ENCODE measurements at regions of chr1 and their contacts with region 1.

Region 1: DNA sequence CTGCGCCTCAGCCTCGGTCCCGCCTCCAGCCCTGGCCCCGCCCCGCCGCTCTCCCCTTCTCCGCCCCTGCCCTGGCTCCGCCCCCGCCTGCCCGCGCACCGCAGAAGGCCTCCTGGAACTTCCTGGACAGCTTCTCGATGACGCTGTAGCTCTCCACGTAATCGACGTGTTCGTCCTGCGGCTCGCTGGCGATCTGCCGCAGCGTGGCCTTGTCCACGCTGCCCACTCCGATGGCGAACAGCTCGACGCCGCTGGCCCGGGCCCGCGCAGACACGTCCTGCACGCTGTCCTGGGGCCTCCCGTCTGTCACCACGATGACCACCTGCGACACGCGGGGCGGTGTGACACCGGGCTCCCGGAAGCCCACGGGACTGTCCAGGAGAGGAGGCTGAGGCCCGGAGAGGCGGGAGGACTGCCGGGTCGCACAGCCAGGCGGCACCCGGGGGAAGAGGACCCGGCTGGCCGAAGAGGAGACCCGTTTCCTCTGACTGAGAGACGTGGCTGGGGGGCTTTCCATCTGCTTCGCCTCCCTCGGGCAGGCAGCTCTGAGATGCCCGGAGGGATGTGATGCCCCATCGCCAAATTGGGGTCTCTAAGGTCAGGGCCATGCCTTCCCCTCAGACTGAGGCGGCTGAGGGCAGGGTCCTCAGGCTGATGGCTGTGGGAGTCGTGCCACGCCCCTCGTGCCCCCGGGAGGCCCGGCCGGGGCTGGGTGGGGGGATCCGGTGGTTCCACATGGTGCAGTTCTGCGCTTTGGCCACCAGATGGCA is 4.6 kb downstream of the MATN1 start:
- DNase-seq: peak; percentile 98
- ATAC-seq: peak; percentile 64
- H3K4me3 ChIP-seq: peak overlapping the region; percentile 7 to 96 (median 92)
- H3K4me3 Mint-ChIP-seq: peak overlapping the region; percentile 88
- H3K27ac ChIP-seq: peak overlapping the region; percentile 99 to 100
- H3K27ac Mint-ChIP-seq: peak overlapping the region; percentile 94
- H3K4me1 ChIP-seq: peaks cover 18 to 54% of the 10 kb centered on the region in 2 donors
- H3K4me1 Mint-ChIP-seq: peaks cover 44% of the 10 kb centered on the region
- H3K27me3 ChIP-seq: no peaks in the 10 kb centered on the region
- H3K27me3 Mint-ChIP-seq: no peaks in the 10 kb centered on the region
- CTCF ChIP-seq: no peak

Region 2: GRCh38 chr1:30586671-30587070 is 132.2 kb before region 1 on chr1:
- CTCF ChIA-PET with region 1: no interaction called
- POLR2A ChIA-PET with region 1: no interaction called
- intact Hi-C with region 1: no loop called
- DNase-seq: no peak
- ATAC-seq: no peak
- H3K4me3 ChIP-seq: no peak overlapping the region
- H3K4me3 Mint-ChIP-seq: no peak overlapping the region
- H3K27ac ChIP-seq: no peak overlapping the region
- H3K27ac Mint-ChIP-seq: no peak overlapping the region
- H3K4me1 ChIP-seq: no peaks in the 10 kb centered on the region
- H3K4me1 Mint-ChIP-seq: no peaks in the 10 kb centered on the region
- H3K27me3 ChIP-seq: peaks cover 0 to 19% (median 2%) of the 10 kb centered on the region in 4 experiments
- H3K27me3 Mint-ChIP-seq: peaks cover 46% of the 10 kb centered on the region
- CTCF ChIP-seq: no peak

Region 3: GRCh38 chr1:30700528-30701257 is 18.1 kb before region 1 on chr1:
- CTCF ChIA-PET with region 1: no interaction called
- POLR2A ChIA-PET with region 1: no interaction called
- intact Hi-C with region 1: no loop called
- DNase-seq: no peak
- ATAC-seq: no peak
- H3K4me3 ChIP-seq: no peak overlapping the region
- H3K4me3 Mint-ChIP-seq: no peak overlapping the region
- H3K27ac ChIP-seq: no peak overlapping the region
- H3K27ac Mint-ChIP-seq: no peak overlapping the region
- H3K4me1 ChIP-seq: no peaks in the 10 kb centered on the region
- H3K4me1 Mint-ChIP-seq: no peaks in the 10 kb centered on the region
- H3K27me3 ChIP-seq: peaks cover 0 to 4% (median 0%) of the 10 kb centered on the region in 4 experiments
- H3K27me3 Mint-ChIP-seq: peaks cover 9% of the 10 kb centered on the region
- CTCF ChIP-seq: no peak

Region 4: DNA sequence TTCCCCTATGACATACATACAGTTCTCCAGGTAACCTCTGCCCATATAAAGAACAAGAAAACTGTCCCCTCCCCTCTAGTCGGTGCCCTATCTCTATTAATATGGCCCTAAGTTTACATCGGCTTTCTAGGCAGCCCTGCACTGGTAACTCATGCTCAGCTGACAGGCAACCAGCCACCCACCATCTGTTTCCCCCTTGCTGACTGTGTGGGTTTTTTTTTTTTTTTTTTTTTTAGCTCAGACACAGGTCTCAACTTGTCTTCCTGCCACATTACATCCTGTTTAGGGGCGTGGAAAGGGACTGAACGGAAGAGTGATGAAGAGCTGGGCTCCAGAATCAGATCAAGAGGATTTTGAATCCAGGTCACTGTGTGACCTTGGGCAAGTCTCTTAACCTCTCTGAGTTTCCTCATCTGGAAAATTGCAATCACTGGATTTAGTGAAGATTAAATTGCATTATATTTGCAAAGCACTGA is 24.8 kb after region 1 on chr1:
- CTCF ChIA-PET with region 1: interaction called, 769 read pairs
- POLR2A ChIA-PET with region 1: interaction called, 57 read pairs
- intact Hi-C with region 1: loop called (anchors 2 kb)
- DNase-seq: peak; percentile 88
- ATAC-seq: peak; percentile 79
- H3K4me3 ChIP-seq: peak overlapping the region in 4 of 5 experiments; percentile 16 to 62 (median 28)
- H3K4me3 Mint-ChIP-seq: peak overlapping the region; percentile 78
- H3K27ac ChIP-seq: peak overlapping the region; percentile 98 to 100
- H3K27ac Mint-ChIP-seq: peak overlapping the region; percentile 87
- H3K4me1 ChIP-seq: peaks cover 84 to 99% of the 10 kb centered on the region in 2 donors
- H3K4me1 Mint-ChIP-seq: peaks cover 99% of the 10 kb centered on the region
- H3K27me3 ChIP-seq: no peaks in the 10 kb centered on the region
- H3K27me3 Mint-ChIP-seq: no peaks in the 10 kb centered on the region
- CTCF ChIP-seq: no peak

Region 5: DNA sequence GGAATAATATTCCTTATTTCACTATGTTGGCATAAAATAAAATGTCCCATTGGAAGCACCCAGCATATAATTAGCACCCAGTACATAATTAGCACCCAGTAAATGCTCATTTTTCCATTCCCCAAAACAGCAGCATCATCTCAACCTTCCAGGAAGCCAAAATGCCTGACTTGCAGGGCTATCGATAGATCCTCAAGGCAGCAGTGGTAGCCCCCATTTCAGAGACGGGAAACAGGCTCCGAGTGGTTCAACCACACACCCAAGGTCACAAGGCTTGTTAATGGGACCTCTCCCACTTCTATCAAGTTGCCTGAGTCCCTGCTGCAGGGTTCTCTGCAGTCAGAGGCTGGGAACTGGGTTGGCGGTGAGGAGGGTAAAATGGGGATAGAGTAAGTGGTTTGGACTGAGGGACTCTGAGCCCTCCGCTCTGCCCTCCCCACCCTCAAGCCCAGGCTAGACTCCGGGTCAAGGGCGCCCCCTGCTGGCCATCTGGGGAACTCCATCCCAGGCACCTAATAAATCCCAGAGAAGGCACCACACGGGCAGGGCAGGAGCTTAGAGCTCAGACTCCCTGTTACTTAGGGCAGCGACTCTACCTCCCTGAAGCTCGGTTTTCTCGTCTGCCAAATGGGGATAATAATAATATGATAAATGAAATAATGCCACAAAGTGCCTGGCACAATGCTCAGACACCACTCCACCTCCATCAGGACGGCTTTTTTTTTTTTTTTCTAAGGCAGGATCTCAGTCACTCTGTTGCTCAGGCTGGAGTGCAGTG is 60.7 kb after region 1 on chr1:
- CTCF ChIA-PET with region 1: interaction called, 536 read pairs
- POLR2A ChIA-PET with region 1: interaction called, 34 read pairs
- intact Hi-C with region 1: loop called (anchors 1 kb)
- DNase-seq: peak; percentile 92
- ATAC-seq: peak; percentile 76
- H3K4me3 ChIP-seq: no peak overlapping the region
- H3K4me3 Mint-ChIP-seq: peak overlapping the region; percentile 53
- H3K27ac ChIP-seq: peak overlapping the region in 1 of 2 donors; percentile 59
- H3K27ac Mint-ChIP-seq: peak overlapping the region; percentile 84
- H3K4me1 ChIP-seq: peaks cover 43 to 56% of the 10 kb centered on the region in 2 donors
- H3K4me1 Mint-ChIP-seq: peaks cover 42% of the 10 kb centered on the region
- H3K27me3 ChIP-seq: peaks cover 0 to 7% (median 0%) of the 10 kb centered on the region in 4 experiments
- H3K27me3 Mint-ChIP-seq: no peaks in the 10 kb centered on the region
- CTCF ChIP-seq: peak; percentile 93

Region 6: GRCh38 chr1:30929135-30929889 is 210.5 kb after region 1 on chr1:
- CTCF ChIA-PET with region 1: interaction called, 51 read pairs
- POLR2A ChIA-PET with region 1: interaction called, 5 read pairs
- intact Hi-C with region 1: loop called (anchors 1 kb)
- DNase-seq: peak; percentile 65
- ATAC-seq: peak; percentile 71
- H3K4me3 ChIP-seq: no peak overlapping the region
- H3K4me3 Mint-ChIP-seq: no peak overlapping the region
- H3K27ac ChIP-seq: no peak overlapping the region
- H3K27ac Mint-ChIP-seq: peak overlapping the region; percentile 26
- H3K4me1 ChIP-seq: peaks cover 0 to 11% of the 10 kb centered on the region in 2 donors
- H3K4me1 Mint-ChIP-seq: peaks cover 13% of the 10 kb centered on the region
- H3K27me3 ChIP-seq: no peaks in the 10 kb centered on the region
- H3K27me3 Mint-ChIP-seq: no peaks in the 10 kb centered on the region
- CTCF ChIP-seq: peak; percentile 86

Region 7: DNA sequence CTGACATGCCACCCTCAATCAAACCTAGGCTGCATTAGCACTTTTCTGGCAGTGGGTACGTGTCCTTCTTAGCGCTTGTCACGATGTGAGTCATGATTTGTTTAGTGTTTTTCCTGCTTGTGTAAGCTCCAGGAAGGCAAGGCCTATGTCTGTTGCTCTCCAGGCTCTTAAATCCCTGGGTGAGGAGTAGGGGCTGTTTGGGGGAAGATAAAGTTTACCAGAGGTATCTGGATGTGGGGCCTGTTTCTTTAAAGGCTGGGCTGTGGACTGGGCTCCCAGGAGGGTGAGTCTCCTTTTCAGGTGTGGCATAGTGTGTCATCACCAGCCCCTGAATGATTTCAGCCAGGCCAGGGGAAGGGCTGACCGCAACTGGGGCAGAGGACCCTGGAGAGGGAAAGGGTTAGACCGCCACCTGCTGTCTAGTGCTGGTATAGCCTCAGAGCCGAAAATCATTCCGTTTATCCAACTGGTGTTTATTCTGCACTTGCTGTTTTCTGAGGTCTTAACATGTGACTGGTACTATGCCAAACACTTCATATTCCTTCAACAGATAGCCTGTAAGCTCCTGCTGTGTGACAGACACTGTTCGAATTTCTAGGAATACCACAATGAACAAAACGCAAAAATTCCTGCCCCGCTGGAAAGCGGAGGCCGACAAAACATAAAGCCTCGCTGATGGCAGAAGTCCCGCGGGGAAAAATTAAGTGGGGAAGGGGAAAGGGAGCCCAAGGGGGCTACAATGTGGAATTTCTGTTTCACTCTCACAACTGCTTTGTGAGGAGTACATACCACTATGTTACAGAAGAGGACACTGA is 703.9 kb after region 1 on chr1:
- CTCF ChIA-PET with region 1: no interaction called
- POLR2A ChIA-PET with region 1: no interaction called
- intact Hi-C with region 1: loop called (anchors 2 kb)
- DNase-seq: peak; percentile 84
- ATAC-seq: peak; percentile 46
- H3K4me3 ChIP-seq: peak overlapping the region in 3 of 5 experiments; percentile 2 to 51 (median 15)
- H3K4me3 Mint-ChIP-seq: peak overlapping the region; percentile 74
- H3K27ac ChIP-seq: peak overlapping the region; percentile 29 to 50
- H3K27ac Mint-ChIP-seq: peak overlapping the region; percentile 78
- H3K4me1 ChIP-seq: peaks cover 21 to 23% of the 10 kb centered on the region in 2 donors
- H3K4me1 Mint-ChIP-seq: peaks cover 26% of the 10 kb centered on the region
- H3K27me3 ChIP-seq: peaks cover 0 to 5% (median under 1%) of the 10 kb centered on the region in 4 experiments
- H3K27me3 Mint-ChIP-seq: peaks cover 8% of the 10 kb centered on the region
- CTCF ChIP-seq: peak; percentile 96

Measured in B cell (primary cell).